Caco-2 (cell line): ENCODE measurements at regions of chr2 and their contacts with region 1.

Region 1: GRCh38 chr2:235055891-235056516 is 104.2 kb downstream of the SH3BP4 start:
- DNase-seq: peak; percentile 45 to 56
- H3K4me3 ChIP-seq: no peak overlapping the region
- H3K4me3 Mint-ChIP-seq: no peak overlapping the region
- H3K27ac Mint-ChIP-seq: no peak overlapping the region
- H3K4me1 ChIP-seq: no peaks in the 10 kb centered on the region
- H3K4me1 Mint-ChIP-seq: peaks cover 10% of the 10 kb centered on the region
- H3K27me3 ChIP-seq: no peaks in the 10 kb centered on the region
- H3K27me3 Mint-ChIP-seq: no peaks in the 10 kb centered on the region
- CTCF ChIP-seq: peak; percentile 27 to 69

Region 2: DNA sequence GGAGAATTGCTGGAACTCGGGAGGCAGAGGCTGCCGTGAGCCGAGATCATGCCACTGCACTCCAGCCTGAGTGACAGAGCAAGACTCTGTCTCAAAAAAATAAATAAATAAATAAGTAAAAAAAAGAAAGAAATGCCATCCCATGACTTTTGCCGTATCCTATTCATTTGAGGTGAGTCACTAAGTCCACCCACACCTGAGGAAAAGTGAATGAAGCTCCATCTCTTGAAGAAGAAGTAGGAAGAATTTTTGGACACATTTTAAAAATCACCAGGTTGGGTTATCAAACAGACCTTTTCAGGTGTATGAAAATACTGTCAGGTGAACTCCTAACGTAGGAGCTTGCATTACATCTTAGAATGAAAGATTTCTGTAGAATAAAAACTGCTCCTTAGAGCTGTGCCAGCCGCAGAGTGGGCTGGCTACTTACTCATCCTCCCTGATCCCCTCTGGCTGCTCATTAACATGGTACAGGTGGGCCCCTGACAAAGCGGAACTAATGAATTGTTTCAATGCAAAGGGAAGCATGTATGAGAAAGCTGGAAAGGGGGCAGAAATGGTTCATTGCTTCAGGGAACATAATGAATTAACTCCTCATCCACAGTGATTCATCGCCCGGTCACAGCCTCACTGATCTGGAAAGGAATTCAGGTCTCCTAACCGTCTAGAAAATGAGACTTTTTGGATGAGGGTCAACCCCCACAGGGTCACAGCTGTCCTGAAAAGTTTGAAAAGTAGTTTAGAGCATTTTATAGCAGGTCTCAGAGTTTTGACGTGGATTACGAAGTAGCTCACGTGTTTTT is 814.1 kb before region 1 on chr2:
- CTCF ChIA-PET with region 1: no interaction called
- POLR2A ChIA-PET with region 1: no interaction called
- intact Hi-C with region 1: no loop called
- DNase-seq: no peak
- H3K4me3 ChIP-seq: no peak overlapping the region
- H3K4me3 Mint-ChIP-seq: no peak overlapping the region
- H3K27ac Mint-ChIP-seq: no peak overlapping the region
- H3K4me1 ChIP-seq: 0 out of 2 replicates have a peak, but pooled peaks cover 6% of the 10 kb centered on the region
- H3K4me1 Mint-ChIP-seq: peaks cover 21% of the 10 kb centered on the region
- H3K27me3 ChIP-seq: no peaks in the 10 kb centered on the region
- H3K27me3 Mint-ChIP-seq: no peaks in the 10 kb centered on the region
- CTCF ChIP-seq: no peak

Region 3: DNA sequence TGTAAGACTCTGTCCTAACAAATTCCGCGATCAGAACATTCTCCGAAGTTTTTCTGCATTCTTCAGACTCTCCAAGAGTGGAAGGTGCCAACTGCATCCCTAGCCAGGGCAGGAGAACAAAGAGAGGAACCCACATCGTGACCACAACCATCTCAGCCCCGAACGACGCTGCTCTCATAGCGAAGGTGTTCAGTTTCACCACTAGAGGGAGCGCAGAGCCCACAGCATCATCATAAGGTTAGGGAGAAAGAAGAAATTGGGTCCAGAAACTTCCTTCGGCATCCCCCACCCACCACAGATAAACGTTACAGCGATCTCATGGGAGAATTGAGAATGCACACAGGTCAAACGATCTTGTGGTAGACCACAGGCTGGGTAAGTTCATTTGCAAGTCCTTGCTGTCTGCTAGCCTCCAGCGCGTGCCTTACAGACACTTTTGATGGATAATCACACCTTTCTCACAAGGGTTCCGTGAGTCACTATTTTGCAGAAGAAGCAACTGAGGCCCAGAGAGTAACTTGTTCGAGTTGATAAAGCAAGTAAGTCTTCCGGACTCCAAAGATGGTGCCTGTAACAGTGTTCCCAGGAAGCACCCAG is 505.4 kb before region 1 on chr2:
- CTCF ChIA-PET with region 1: no interaction called
- POLR2A ChIA-PET with region 1: no interaction called
- intact Hi-C with region 1: loop called (anchors 5 kb)
- DNase-seq: peak; percentile 55 to 66
- H3K4me3 ChIP-seq: no peak overlapping the region
- H3K4me3 Mint-ChIP-seq: no peak overlapping the region
- H3K27ac Mint-ChIP-seq: no peak overlapping the region
- H3K4me1 ChIP-seq: no peaks in the 10 kb centered on the region
- H3K4me1 Mint-ChIP-seq: peaks cover 4% of the 10 kb centered on the region
- H3K27me3 ChIP-seq: no peaks in the 10 kb centered on the region
- H3K27me3 Mint-ChIP-seq: peaks cover 2% of the 10 kb centered on the region
- CTCF ChIP-seq: peak; percentile 78

Region 4: DNA sequence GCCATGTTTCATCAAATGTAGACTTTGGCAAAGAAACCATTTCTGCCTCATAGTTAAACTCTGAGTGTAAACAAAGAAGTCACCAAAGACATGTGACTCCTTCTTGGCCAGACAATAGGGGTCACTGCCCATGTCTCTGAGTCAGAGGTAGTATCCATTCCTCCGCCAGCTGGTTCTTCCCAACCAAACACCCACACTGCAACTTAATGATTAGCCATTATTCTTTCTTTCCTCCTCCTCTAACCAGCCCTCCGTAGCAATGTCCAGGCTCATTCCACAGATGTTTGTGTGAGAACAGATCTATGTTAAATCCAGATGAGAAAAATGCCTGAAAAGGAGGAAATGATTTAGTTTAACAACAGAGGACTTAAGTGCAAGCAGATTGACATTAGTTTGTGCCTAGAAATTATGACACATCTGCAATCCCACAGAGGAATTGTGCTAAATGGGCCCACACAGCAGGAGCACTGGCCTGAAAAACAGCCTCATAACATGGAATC is 232.1 kb before region 1 on chr2:
- CTCF ChIA-PET with region 1: interaction called, 3 read pairs
- POLR2A ChIA-PET with region 1: no interaction called
- intact Hi-C with region 1: loop called (anchors 1 kb)
- DNase-seq: peak; percentile 32 to 46
- H3K4me3 ChIP-seq: no peak overlapping the region
- H3K4me3 Mint-ChIP-seq: no peak overlapping the region
- H3K27ac Mint-ChIP-seq: no peak overlapping the region
- H3K4me1 ChIP-seq: peaks cover 17% of the 10 kb centered on the region
- H3K4me1 Mint-ChIP-seq: no peaks in the 10 kb centered on the region
- H3K27me3 ChIP-seq: no peaks in the 10 kb centered on the region
- H3K27me3 Mint-ChIP-seq: no peaks in the 10 kb centered on the region
- CTCF ChIP-seq: no peak

Region 5: DNA sequence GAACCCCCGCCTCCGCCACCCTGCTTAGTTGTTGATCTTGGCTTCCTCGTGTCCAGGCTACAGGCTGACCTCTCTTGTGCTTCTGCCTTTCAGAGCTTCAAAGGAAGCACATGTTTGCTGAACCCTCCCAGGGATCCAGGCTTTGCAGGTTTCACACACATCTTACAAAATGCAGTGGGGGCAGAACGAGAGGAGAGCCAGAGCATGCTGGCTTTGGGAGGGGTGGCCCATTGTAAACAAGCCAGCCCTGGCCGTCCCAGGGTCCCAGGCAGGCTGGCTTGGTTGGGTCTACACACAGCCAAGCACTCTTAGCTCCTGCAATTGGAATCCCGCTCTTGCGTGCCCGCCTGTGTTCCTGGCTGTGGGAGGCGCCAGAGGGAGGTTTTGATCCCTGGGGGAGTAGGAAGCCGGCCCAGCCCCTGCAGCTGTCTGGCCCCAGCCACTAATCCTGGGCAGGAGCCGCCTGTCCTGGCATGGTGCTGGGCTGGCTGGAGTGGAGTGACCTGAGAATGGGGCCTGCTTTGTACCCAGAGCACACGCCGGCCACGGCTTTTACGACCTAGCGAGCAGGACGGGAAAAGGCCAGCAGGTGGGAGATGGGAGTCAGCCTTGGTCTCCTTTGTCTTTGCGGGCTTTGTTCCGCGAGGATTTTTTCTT is 50.3 kb before region 1 on chr2:
- CTCF ChIA-PET with region 1: no interaction called
- POLR2A ChIA-PET with region 1: no interaction called
- intact Hi-C with region 1: loop called (anchors 5 kb)
- DNase-seq: peak; percentile 56 to 59
- H3K4me3 ChIP-seq: no peak overlapping the region
- H3K4me3 Mint-ChIP-seq: peak overlapping the region; percentile 40
- H3K27ac Mint-ChIP-seq: peak overlapping the region; percentile 52
- H3K4me1 ChIP-seq: peaks cover 89% of the 10 kb centered on the region
- H3K4me1 Mint-ChIP-seq: peaks cover 40% of the 10 kb centered on the region
- H3K27me3 ChIP-seq: no peaks in the 10 kb centered on the region
- H3K27me3 Mint-ChIP-seq: no peaks in the 10 kb centered on the region
- CTCF ChIP-seq: peak in 1 of 2 experiments; percentile 19

Region 6: DNA sequence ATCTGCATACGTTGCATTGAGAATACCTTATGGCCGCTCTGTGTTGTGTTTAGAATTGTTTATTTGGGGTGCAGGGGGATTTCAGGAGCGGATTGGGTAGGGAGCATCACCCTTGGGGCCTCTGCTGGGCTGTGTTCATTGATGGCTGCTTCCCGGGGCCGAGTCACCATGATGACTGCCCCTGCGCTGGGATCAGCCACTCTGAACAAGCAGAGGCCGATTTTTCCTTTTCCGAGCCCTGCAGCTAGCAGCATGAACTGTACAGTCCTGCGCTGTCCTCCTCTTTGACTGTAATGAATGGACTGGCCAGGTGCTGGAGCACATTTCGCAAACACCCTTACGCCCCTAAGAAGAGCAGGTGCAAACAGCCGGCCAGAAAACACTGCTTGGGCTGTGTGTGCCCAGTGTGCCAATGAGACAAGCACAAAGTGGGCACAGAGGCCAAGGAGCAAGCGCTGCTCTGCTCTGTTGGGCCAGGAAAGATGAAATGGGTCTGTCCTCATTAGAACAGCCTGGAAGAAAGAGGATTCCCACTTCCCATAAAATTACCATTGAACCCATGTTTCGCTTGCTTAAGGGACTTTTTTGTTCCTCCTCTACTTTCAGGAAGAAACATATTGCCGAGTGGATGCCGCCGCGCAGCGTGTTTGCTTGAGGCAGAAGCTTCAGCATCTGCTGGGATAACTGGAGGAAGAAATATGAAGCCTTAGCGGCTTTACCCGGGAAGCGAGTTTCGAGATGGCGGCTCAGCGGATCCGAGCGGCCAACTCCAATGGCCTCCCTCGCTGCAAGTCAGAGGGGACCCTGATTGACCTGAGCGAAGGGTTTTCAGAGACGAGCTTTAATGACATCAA is 21.5 kb before region 1 on chr2:
- CTCF ChIA-PET with region 1: no interaction called
- POLR2A ChIA-PET with region 1: no interaction called
- intact Hi-C with region 1: no loop called
- DNase-seq: no peak
- H3K4me3 ChIP-seq: no peak overlapping the region
- H3K4me3 Mint-ChIP-seq: no peak overlapping the region
- H3K27ac Mint-ChIP-seq: no peak overlapping the region
- H3K4me1 ChIP-seq: no peaks in the 10 kb centered on the region
- H3K4me1 Mint-ChIP-seq: peaks cover 6% of the 10 kb centered on the region
- H3K27me3 ChIP-seq: no peaks in the 10 kb centered on the region
- H3K27me3 Mint-ChIP-seq: no peaks in the 10 kb centered on the region
- CTCF ChIP-seq: no peak